ENCODE measurements at regions of chr9 and their contacts with region 1.

Region 1: DNA sequence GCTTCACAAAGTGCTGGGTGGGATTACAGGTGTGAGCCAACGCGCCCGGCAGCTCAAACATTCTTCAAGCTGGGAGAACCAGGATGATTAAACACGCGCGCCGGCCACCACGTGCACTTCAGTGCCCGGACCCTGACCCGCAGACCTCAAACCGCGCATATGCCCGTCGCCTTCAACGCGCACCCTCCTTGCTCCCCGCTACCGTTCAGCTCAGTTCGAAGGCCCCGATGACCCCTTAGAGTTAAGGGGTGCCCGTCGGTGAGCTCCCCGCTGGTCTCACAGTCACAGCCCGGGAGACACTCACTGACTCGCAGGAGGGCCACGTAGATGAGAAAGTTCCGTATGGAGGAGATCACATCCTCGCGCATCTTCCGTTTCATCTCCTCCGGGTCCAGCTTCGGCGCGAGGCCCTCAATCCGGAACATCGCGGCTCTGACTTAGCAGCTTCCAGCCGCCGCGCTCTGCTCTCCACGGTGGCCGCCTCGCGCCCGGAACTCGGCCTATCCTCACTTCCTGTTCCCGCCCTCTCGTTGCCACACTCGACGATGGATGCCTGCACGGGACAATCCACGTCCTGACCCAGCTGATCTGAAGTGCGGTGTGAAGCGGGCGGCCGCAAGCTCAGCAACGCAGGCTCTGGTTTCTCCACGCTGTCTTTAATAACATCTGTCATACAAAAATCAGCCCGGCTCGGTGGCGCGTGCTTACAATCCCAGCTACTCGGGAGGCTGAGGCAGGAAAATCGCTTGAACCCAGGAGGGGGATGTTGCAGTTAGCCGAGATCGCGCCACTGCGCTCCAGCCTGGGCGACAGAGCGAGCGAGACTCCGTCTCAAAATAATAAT is at the start of gene TOMM5:
- DNase-seq: peak; percentile 82 to 96
- ATAC-seq: peak; percentile 94 to 97
- H3K4me3 ChIP-seq: peak within 1 kb of the TSS; percentile 83
- H3K27ac ChIP-seq: peak within 1 kb of the TSS; percentile 89 to 94
- H3K4me1 ChIP-seq: peaks cover 23% of the 10 kb centered on the region
- CTCF ChIP-seq: no peak
- EP300 ChIP-seq: no peak
- POLR2A ChIP-seq: peak; percentile 96
- RAD21 ChIP-seq: no peak
- polyA plus RNA-seq, gene TOMM5: 303 and 338 TPM in 2 replicates

Region 2: GRCh38 chr9:37465249-37466036 is 126.9 kb before region 1 on chr9 and contains the start of gene ZBTB5:
- CTCF ChIA-PET with region 1: no interaction called
- POLR2A ChIA-PET with region 1: interaction called, 10 read pairs
- DNase-seq: peak; percentile 99 to 100
- ATAC-seq: peak; percentile 79 to 86
- H3K4me3 ChIP-seq: peak within 1 kb of the TSS; percentile 55
- H3K27ac ChIP-seq: peak within 1 kb of the TSS; percentile 97 to 99
- H3K4me1 ChIP-seq: peaks cover 32% of the 10 kb centered on the region
- CTCF ChIP-seq: no peak
- EP300 ChIP-seq: no peak
- POLR2A ChIP-seq: peak; percentile 79
- RAD21 ChIP-seq: no peak
- polyA plus RNA-seq, gene ZBTB5: 18.1 and 19.8 TPM in 2 replicates

Region 3: GRCh38 chr9:37575921-37576721 is 16.2 kb before region 1 on chr9 and contains the start of gene FBXO10:
- CTCF ChIA-PET with region 1: interaction called, 8 read pairs
- POLR2A ChIA-PET with region 1: interaction called, 24 read pairs
- DNase-seq: peak; percentile 30 to 69
- ATAC-seq: peak; percentile 92
- H3K4me3 ChIP-seq: peak within 1 kb of the TSS; percentile 86
- H3K27ac ChIP-seq: peak within 1 kb of the TSS; percentile 90 to 98
- H3K4me1 ChIP-seq: peaks cover 13% of the 10 kb centered on the region; the same call in 2 of the 3 replicates
- CTCF ChIP-seq: no peak
- EP300 ChIP-seq: no peak
- POLR2A ChIP-seq: peak; percentile 49
- RAD21 ChIP-seq: no peak
- polyA plus RNA-seq, gene FBXO10: 5.3 and 5.7 TPM in 2 replicates

Region 4: DNA sequence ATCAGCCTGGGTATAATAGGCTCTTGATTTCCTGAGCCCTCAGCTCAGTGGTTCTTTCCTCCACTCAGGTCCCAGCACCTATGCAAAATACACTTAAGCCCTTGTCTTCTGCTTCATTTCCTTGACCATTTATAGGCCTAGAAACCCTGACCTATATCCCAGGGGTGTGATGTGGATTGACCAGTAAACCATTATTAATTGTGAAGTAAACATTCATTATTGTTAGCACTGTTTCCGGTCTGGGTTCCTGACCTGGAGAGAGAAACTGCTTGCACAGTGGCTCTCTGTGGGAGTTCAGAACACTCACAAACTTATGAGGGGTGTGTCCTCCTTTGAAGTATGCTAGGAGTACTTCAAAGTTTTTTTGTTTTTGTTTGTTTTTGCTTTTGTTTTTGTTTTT is 19.6 kb after region 1 on chr9:
- CTCF ChIA-PET with region 1: interaction called, 11 read pairs
- POLR2A ChIA-PET with region 1: interaction called, 3 read pairs
- DNase-seq: no peak
- ATAC-seq: no peak
- H3K4me3 ChIP-seq: no peak overlapping the region
- H3K27ac ChIP-seq: no peak overlapping the region
- H3K4me1 ChIP-seq: no peaks in the 10 kb centered on the region
- CTCF ChIP-seq: no peak
- EP300 ChIP-seq: no peak
- POLR2A ChIP-seq: no peak
- RAD21 ChIP-seq: no peak

Region 5: GRCh38 chr9:37617832-37618231 is 25.5 kb after region 1 on chr9:
- CTCF ChIA-PET with region 1: interaction called, 11 read pairs
- POLR2A ChIA-PET with region 1: no interaction called
- DNase-seq: no peak
- ATAC-seq: no peak
- H3K4me3 ChIP-seq: no peak overlapping the region
- H3K27ac ChIP-seq: no peak overlapping the region
- H3K4me1 ChIP-seq: no peaks in the 10 kb centered on the region
- CTCF ChIP-seq: no peak
- EP300 ChIP-seq: no peak
- POLR2A ChIP-seq: no peak
- RAD21 ChIP-seq: no peak

Region 6: DNA sequence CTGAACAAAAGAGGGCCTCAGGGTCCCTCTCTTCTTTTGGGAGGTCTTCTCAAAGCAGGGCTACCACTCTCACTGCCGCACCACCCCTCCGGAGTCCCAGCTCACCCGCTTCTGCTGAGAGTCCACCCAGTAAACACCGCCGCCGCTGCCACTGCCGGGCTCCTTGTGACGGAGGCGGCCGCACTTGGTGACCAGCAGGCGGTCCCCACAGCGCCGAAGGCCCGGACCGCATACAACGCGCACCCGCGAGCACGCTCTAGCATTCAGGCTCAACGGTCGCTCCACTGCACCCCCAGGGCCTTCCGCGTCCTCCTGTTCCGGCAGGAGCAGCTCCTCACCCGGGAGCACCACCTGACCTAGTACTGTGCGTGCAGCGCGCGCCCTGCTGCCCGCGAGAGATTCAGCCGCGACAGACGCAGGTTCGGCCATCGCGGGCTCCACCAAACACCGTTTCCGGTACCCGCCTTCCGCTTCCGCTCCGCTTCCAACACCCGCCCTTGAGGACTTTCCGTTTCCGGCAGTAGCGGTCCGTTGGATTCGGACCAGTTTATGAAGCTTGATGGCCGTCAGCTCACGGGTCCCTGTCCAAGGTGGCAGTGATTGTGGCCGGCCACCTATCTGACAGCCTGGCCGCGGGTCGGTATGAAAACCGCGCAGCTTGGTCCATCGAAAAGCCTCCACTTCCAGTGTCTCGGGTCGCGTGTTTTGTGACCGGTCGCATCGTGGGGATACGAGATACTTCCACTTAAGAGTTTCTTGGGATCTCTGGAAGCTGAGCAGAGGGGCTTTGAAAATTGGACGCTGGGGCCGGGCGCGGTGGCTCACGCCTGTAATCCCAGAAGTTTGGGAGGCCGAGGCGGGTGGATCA is 192.5 kb after region 1 on chr9 and contains the start of gene EXOSC3:
- CTCF ChIA-PET with region 1: no interaction called
- POLR2A ChIA-PET with region 1: interaction called, 14 read pairs
- DNase-seq: peak; percentile 93 to 94
- ATAC-seq: peak; percentile 98
- H3K4me3 ChIP-seq: peak within 1 kb of the TSS; percentile 74
- H3K27ac ChIP-seq: peak within 1 kb of the TSS; percentile 79 to 90
- H3K4me1 ChIP-seq: peaks cover 19% of the 10 kb centered on the region
- CTCF ChIP-seq: no peak
- EP300 ChIP-seq: no peak
- POLR2A ChIP-seq: peak; percentile 92
- RAD21 ChIP-seq: no peak
- polyA plus RNA-seq, gene EXOSC3: 40.7 and 63.2 TPM in 2 replicates

Region 7: GRCh38 chr9:37800631-37801286 is 208.4 kb after region 1 on chr9 and contains the start of gene DCAF10:
- CTCF ChIA-PET with region 1: no interaction called
- POLR2A ChIA-PET with region 1: interaction called, 10 read pairs
- DNase-seq: peak; percentile 58 to 89
- ATAC-seq: peak; percentile 89 to 92
- H3K4me3 ChIP-seq: peak within 1 kb of the TSS; percentile 86
- H3K27ac ChIP-seq: peak within 1 kb of the TSS; percentile 93 to 98
- H3K4me1 ChIP-seq: peaks cover 21% of the 10 kb centered on the region
- CTCF ChIP-seq: no peak
- EP300 ChIP-seq: peak in 1 of 2 experiments; percentile 25; a peak in 1 of 5 replicates
- POLR2A ChIP-seq: peak; percentile 65
- RAD21 ChIP-seq: no peak
- polyA plus RNA-seq, gene DCAF10: 25.8 and 33.1 TPM in 2 replicates